CD8-positive, alpha-beta T cell (primary cell): ENCODE measurements at regions of chr1 and their contacts with region 1.

Region 1: GRCh38 chr1:93798301-93798700 is 80.7 kb downstream of the DNTTIP2 start:
- DNase-seq: no peak
- ATAC-seq: no peak
- H3K4me3 ChIP-seq: no peak overlapping the region
- H3K4me3 Mint-ChIP-seq: no peak overlapping the region
- H3K27ac ChIP-seq: no peak overlapping the region
- H3K27ac Mint-ChIP-seq: no peak overlapping the region
- H3K4me1 ChIP-seq: no peaks in the 10 kb centered on the region
- H3K4me1 Mint-ChIP-seq: no peaks in the 10 kb centered on the region
- H3K27me3 ChIP-seq: no peaks in the 10 kb centered on the region
- H3K27me3 Mint-ChIP-seq: peaks cover 3% of the 10 kb centered on the region
- CTCF ChIP-seq: no peak

Region 2: DNA sequence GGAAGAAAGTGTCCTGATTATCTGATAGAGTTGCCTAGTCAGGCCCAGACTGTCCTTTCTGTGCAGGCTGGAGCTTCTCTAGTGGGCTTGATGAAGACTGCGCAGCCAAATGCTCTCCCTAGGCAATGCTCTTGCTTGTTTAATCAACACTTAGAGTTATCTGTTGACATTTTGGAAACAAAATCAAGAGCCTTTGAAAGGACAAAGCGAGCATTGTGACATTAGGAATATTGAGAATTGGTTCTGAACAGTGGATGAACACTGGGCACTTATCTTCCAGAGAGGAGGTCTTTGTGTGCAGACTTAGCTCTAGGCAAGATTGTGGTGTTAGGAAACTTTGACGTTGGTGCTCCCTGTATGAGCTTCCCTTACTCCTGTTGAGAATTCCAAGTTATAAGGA is 13.8 kb before region 1 on chr1:
- CTCF ChIA-PET with region 1: no interaction called
- POLR2A ChIA-PET with region 1: no interaction called
- intact Hi-C with region 1: loop called in 1 of 2 experiments (anchors 1 kb)
- DNase-seq: no peak
- ATAC-seq: no peak
- H3K4me3 ChIP-seq: no peak overlapping the region
- H3K4me3 Mint-ChIP-seq: no peak overlapping the region
- H3K27ac ChIP-seq: no peak overlapping the region
- H3K27ac Mint-ChIP-seq: no peak overlapping the region
- H3K4me1 ChIP-seq: no peaks in the 10 kb centered on the region
- H3K4me1 Mint-ChIP-seq: no peaks in the 10 kb centered on the region
- H3K27me3 ChIP-seq: no peaks in the 10 kb centered on the region
- H3K27me3 Mint-ChIP-seq: no peaks in the 10 kb centered on the region
- CTCF ChIP-seq: no peak